Right ventricle myocardium inferior (tissue), 1 donor: ENCODE measurements at regions of chr11 and their contacts with region 1.

Region 1: DNA sequence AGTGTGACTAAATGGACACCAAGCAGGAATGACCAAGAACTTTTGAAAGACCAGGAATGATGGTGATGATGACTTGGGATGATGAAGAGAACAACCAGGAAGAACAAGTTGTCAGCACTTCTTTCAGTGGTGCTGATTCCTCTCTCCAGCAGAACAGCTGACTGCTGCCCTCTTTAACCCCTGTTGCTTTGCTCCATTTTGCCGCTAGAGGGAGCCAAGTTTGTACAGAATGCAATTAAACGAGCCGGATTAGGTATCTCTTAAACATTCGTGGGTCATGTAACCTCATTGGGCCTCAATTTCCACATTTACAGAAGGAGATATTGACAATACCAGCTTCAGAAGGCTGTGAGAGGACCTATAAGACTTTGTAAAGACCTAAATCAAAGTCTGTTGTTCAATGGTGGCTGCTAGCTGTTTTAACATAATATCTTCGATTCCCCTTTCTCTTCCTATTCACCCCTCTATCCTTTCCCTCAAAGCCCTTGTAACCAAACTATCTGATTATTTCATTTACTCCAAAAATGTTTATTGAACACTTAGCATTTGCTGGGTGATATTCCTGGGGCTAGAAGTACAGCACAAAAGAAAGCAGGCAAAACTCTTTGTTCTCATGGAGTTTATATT is 1.9 kb downstream of the OR4S1 start:
- DNase-seq: no peak
- ATAC-seq: peak; percentile 57

Region 2: GRCh38 chr11:48172818-48173609 is 134.9 kb before region 1 on chr11:
- intact Hi-C with region 1: loop called (anchors 2 kb)
- DNase-seq: peak; percentile 77
- ATAC-seq: peak; percentile 72